ENCODE measurements at regions of chr15 and their contacts with region 1.

Region 1: DNA sequence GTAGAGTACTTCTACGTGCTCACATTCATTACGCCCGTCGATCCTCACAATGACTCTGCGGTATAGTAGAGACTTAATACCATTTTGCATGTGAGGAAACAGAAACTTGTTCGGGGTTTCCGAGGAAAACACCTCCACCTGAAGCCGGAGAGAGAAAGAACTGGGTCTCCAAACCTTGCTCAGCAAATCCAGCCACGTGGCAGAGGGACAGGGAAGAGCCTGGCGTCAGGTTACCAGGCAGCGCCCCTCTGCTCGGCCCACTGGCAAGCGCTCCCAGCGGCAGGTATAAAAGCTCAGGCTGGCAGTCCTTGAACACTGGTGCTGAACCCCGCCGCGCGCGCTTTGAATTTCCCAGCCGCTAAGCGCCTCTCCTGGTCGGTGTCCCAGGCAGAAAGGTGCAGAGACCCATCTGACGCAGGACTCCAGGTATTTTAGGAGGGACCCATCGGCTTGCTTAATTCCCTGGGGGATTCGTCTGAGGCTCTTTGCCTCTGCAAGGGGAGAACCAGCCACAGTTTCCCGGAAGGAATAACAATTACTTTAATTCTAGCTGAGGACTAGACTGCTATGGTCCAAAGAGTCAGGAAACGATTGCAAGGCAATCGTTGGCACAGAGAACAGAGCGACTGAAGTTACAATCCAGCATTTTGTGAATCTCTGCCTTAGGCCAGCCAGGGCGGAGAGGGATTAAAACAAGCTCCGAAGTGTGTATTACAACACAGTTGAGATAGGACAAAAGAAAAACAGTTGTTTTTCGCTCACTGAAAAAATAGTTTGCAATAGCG is at the start of gene C2CD4A:
- DNase-seq: peak; percentile 87 to 90
- H3K4me3 ChIP-seq: peak within 1 kb of the TSS; percentile 38
- H3K4me3 Mint-ChIP-seq: peak within 1 kb of the TSS; percentile 73
- H3K27ac Mint-ChIP-seq: no peak within 1 kb of the TSS
- H3K4me1 ChIP-seq: peaks cover 10% of the 10 kb centered on the region
- H3K4me1 Mint-ChIP-seq: peaks cover 3% of the 10 kb centered on the region
- H3K27me3 ChIP-seq: no peaks in the 10 kb centered on the region
- H3K27me3 Mint-ChIP-seq: peaks cover 3% of the 10 kb centered on the region
- CTCF ChIP-seq: peak in 1 of 2 experiments; percentile 37
- total RNA-seq, gene C2CD4A: 0.11 and 0.19 TPM in 2 replicates

Region 2: GRCh38 chr15:62021991-62022600 is 44.8 kb before region 1 on chr15:
- CTCF ChIA-PET with region 1: no interaction called
- POLR2A ChIA-PET with region 1: no interaction called
- intact Hi-C with region 1: loop called (anchors 2 kb)
- DNase-seq: peak in 1 of 2 experiments; percentile 9
- H3K4me3 ChIP-seq: no peak overlapping the region
- H3K4me3 Mint-ChIP-seq: no peak overlapping the region
- H3K27ac Mint-ChIP-seq: no peak overlapping the region
- H3K4me1 ChIP-seq: no peaks in the 10 kb centered on the region
- H3K4me1 Mint-ChIP-seq: no peaks in the 10 kb centered on the region
- H3K27me3 ChIP-seq: no peaks in the 10 kb centered on the region
- H3K27me3 Mint-ChIP-seq: no peaks in the 10 kb centered on the region
- CTCF ChIP-seq: peak; percentile 38 to 41

Region 3: GRCh38 chr15:62209322-62209721 is 142.5 kb after region 1 on chr15:
- CTCF ChIA-PET with region 1: no interaction called
- POLR2A ChIA-PET with region 1: no interaction called
- intact Hi-C with region 1: no loop called
- DNase-seq: peak in 1 of 2 experiments; percentile 25
- H3K4me3 ChIP-seq: no peak overlapping the region
- H3K4me3 Mint-ChIP-seq: peak overlapping the region; percentile 47
- H3K27ac Mint-ChIP-seq: peak overlapping the region; percentile 87
- H3K4me1 ChIP-seq: peaks cover 32% of the 10 kb centered on the region
- H3K4me1 Mint-ChIP-seq: peaks cover 20% of the 10 kb centered on the region
- H3K27me3 ChIP-seq: no peaks in the 10 kb centered on the region
- H3K27me3 Mint-ChIP-seq: no peaks in the 10 kb centered on the region
- CTCF ChIP-seq: no peak

Measured in Caco-2 (cell line).